Common myeloid progenitor, CD34-positive (primary cell): ENCODE measurements at regions of chr18 and their contacts with region 1.

Region 1: GRCh38 chr18:49021433-49022129 is 70.8 kb upstream of the SMAD7 start:
- DNase-seq: peak in 1 of 3 donors; percentile 56
- H3K4me3 ChIP-seq: no peak overlapping the region
- H3K27ac ChIP-seq: no peak overlapping the region
- H3K4me1 ChIP-seq: peaks cover 0 to 60% (median 50%) of the 10 kb centered on the region in 4 experiments
- H3K27me3 ChIP-seq: no peaks in the 10 kb centered on the region

Region 2: GRCh38 chr18:48983771-48984355 is 37.7 kb before region 1 on chr18:
- CTCF ChIA-PET with region 1: interaction called, 43 read pairs
- POLR2A ChIA-PET with region 1: interaction called, 20 read pairs
- DNase-seq: peak; percentile 22 to 66 (median 60)
- H3K4me3 ChIP-seq: no peak overlapping the region
- H3K27ac ChIP-seq: no peak overlapping the region
- H3K4me1 ChIP-seq: peaks cover 0 to 59% (median 22%) of the 10 kb centered on the region in 4 experiments
- H3K27me3 ChIP-seq: no peaks in the 10 kb centered on the region

Region 3: GRCh38 chr18:49011291-49011746 is 10.3 kb before region 1 on chr18:
- CTCF ChIA-PET with region 1: interaction called, 10 read pairs
- POLR2A ChIA-PET with region 1: no interaction called
- DNase-seq: no peak
- H3K4me3 ChIP-seq: no peak overlapping the region
- H3K27ac ChIP-seq: no peak overlapping the region
- H3K4me1 ChIP-seq: peaks cover 0 to 13% (median 8%) of the 10 kb centered on the region in 4 experiments
- H3K27me3 ChIP-seq: no peaks in the 10 kb centered on the region

Region 4: DNA sequence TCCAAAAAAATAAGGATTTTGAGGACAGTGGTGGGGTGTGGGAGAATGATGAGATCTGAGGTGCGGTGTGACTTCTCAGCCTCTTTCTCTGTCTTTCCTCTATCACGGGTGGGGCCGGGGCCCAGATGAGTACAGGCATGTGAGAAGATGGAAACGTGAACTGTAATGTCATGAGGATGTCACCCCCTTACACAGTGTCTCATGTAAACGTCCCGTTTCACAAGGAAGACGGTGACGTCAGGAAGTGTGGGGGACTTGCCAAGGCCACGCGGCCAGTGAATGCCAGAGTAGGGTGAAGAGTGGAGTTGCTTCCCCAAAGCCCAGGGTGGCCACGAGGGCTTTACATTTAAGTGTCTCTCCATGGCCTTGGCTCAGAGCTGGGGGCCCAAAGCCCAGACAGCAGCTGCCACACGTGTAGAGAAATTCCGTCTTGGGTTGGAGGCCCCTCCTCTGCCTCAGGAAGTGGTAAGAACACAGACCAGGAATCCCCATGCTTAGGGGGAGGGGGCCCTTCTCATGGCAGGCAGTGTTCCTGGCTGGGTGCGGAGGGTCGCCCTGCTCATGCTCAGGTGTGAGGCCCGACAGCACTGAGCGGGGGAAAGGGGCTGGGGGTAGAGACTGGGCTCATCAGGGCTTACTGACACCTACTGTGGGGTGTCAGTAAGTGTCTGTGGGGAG is 10.1 kb after region 1 on chr18:
- CTCF ChIA-PET with region 1: interaction called, 16 read pairs
- POLR2A ChIA-PET with region 1: interaction called, 3 read pairs
- DNase-seq: peak in 2 of 3 donors; percentile 77 to 83
- H3K4me3 ChIP-seq: no peak overlapping the region
- H3K27ac ChIP-seq: no peak overlapping the region
- H3K4me1 ChIP-seq: peaks cover 0 to 25% (median 10%) of the 10 kb centered on the region in 4 experiments
- H3K27me3 ChIP-seq: no peaks in the 10 kb centered on the region

Region 5: DNA sequence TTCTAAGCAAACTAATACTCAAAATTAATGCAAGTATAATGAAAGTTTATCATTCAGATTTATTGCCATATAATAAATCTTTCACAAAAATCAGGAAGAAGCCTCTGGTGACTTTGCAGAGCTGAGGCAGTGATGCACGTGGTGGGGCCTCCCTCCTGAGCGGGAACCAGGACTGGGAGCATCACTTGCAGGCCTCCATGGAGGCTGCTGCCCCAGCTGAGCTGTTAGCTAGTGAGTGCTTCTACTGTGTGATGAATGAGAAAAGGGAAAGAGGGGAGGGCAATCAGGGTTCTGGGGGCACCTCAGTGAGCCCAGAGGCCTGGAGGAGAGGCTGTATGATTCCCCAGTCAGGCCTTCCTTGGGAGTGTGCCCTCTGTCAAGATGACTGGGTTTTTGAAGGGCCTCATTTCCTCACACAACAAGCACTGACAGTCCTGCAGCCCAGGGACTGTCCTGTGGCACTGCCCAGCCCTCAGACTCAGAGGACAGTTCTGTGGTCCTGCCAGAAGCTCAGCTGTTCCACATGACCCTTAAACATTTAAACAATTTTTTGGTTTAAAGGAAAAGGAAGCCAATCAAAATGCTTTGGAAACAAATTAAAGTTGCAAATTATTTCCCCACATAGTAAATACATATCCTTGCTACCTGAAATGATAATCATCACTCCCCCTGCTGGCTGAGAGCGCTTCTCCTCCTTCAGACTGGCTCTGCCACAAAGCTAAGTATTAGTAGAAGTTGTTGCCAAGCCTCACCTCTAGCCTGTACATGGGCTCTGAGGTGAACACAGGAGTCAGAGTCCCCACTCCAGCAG is 20.1 kb after region 1 on chr18:
- CTCF ChIA-PET with region 1: interaction called, 336 read pairs
- POLR2A ChIA-PET with region 1: interaction called, 5 read pairs
- DNase-seq: peak; percentile 61 to 81 (median 79)
- H3K4me3 ChIP-seq: no peak overlapping the region
- H3K27ac ChIP-seq: no peak overlapping the region
- H3K4me1 ChIP-seq: peaks cover 3 to 42% (median 32%) of the 10 kb centered on the region in 4 experiments
- H3K27me3 ChIP-seq: no peaks in the 10 kb centered on the region

Region 6: DNA sequence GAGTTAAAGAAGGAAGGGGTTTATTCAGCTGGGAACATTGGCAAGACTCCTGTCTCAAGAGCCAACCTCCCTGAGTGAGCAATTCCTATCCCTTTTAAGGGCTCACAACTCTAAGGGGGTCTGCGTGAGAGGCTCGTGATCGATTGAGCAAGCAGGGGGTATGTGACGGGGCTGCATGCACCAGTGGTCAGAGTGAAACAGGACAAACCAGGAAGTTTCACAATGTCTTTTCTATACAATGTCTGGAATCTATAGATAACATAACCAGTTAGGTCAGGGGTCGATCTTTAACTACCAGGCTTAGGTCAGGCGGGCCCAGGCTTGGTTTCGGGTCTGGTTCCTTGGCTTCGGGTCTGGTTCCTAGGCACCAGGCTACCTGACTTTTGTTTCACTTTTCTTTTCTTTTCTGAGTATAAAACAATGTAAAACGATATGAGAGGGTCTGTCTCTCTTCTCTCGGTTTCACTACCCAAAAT is 510.1 kb after region 1 on chr18:
- CTCF ChIA-PET with region 1: no interaction called
- POLR2A ChIA-PET with region 1: no interaction called
- DNase-seq: no peak
- H3K4me3 ChIP-seq: no peak overlapping the region
- H3K27ac ChIP-seq: no peak overlapping the region
- H3K4me1 ChIP-seq: no peaks in the 10 kb centered on the region
- H3K27me3 ChIP-seq: peaks cover 0 to 3% (median 0%) of the 10 kb centered on the region in 5 experiments